Endothelial cell of umbilical vein (primary cell): ENCODE measurements at regions of chr17 and their contacts with region 1.

Region 1: DNA sequence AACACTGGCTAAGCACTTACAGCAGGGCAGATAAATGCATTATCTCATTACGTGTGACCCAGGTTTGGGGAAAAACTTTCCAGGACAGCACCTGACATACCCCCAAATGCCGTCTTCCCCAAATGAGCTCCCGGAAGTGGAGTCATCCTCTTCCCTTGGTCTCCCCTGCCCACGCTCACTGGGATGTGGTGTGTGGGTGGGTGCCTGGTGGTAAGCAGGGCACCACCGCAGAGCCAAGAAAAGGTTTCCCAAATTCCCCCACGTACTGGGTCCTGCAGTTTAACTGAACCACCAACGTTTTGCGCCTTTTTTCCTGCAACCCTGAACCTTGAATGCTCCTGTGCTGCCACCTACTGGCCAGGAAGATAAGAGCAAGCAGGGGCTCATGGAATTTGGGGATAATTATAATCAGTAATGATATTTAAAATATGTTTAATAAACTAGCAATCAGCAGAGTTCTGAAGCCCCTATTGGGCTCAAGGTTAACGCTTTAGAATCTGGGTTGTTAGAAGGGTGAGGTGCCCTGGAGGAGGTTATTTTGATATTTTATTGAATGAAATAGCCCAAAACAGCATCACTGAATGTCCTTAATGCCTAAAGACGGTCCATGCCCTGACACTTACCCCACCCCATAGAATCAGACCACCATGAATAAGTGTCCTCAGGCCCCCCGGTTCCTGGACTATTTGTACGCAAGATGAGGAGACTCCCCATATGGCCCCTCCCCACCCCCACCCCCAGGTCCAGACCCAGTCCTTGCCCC is 8.0 kb downstream of the SPPL2C start:
- DNase-seq: peak; percentile 44
- H3K4me3 ChIP-seq: no peak overlapping the region
- H3K27ac ChIP-seq: no peak overlapping the region
- H3K4me1 ChIP-seq: no peaks in the 10 kb centered on the region
- H3K27me3 ChIP-seq: peaks cover 0 to 4% of the 10 kb centered on the region in 2 experiments
- CTCF ChIP-seq: peak; percentile 76 to 91
- POLR2A ChIP-seq: no peak

Region 2: DNA sequence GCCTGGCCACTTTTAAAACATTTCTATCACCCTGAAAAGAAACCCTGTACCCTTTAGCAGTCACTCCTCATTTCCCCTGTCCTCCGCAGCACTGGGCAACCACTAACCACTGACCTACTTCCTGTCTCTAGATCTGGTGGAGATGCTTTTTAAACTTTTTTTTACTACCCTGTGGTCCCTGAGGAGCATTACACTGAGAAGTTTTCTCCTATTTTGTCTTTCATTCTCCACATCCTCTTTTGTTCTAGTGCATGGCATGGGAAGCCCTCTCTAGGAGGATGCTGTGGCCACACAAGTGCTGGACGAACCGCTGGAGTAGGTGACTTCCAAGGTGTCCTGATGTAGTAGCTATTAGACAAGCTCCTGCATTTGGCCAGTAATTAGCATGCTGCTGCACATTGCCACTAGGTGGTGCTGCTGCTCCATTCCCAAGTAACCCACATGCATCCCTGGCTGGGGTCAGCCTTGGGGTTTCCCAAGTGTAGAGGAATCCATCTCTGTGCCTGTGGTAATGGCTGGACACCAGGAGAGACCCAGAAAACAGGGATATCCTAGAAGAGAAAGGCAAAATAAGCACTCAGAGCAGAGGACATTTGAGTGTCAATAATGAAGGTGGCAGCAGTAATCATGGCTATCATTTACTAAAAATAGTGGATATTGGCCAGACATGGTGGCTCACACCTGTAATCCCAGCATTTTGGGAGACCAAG is 212.4 kb before region 1 on chr17:
- CTCF ChIA-PET with region 1: interaction called, 48 read pairs
- POLR2A ChIA-PET with region 1: no interaction called
- dilution Hi-C with region 1: no loop called
- intact Hi-C with region 1: loop called (anchors 1 kb)
- DNase-seq: peak; percentile 75
- H3K4me3 ChIP-seq: no peak overlapping the region
- H3K27ac ChIP-seq: no peak overlapping the region
- H3K4me1 ChIP-seq: no peaks in the 10 kb centered on the region
- H3K27me3 ChIP-seq: peaks cover 0 to 1% of the 10 kb centered on the region in 2 experiments
- CTCF ChIP-seq: peak; percentile 92 to 97
- POLR2A ChIP-seq: no peak

Region 3: DNA sequence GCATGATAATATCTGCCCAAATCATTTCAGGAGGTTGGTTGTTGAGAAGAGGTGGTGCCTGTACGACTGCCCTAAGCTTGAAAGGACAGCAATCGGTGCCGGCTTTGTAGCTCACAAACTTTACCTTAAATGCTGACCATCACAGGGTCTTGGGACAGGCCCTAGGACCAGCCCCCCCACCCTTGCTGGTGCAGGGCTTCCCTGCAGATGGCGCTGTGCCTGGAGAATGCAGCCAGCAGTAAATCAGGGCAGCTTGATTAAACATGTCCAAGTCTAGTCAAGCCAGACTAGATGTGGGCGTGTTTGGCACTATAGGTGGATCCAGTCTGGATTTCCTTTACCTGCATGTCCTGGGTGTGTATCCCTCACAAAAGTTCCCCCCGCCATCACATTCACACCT is 204.1 kb before region 1 on chr17:
- CTCF ChIA-PET with region 1: interaction called, 11 read pairs
- POLR2A ChIA-PET with region 1: no interaction called
- dilution Hi-C with region 1: no loop called
- intact Hi-C with region 1: no loop called
- DNase-seq: no peak
- H3K4me3 ChIP-seq: no peak overlapping the region
- H3K27ac ChIP-seq: no peak overlapping the region
- H3K4me1 ChIP-seq: no peaks in the 10 kb centered on the region
- H3K27me3 ChIP-seq: peaks cover 1 to 14% of the 10 kb centered on the region in 2 experiments
- CTCF ChIP-seq: peak in 1 of 2 donors; percentile 20
- POLR2A ChIP-seq: no peak

Region 4: DNA sequence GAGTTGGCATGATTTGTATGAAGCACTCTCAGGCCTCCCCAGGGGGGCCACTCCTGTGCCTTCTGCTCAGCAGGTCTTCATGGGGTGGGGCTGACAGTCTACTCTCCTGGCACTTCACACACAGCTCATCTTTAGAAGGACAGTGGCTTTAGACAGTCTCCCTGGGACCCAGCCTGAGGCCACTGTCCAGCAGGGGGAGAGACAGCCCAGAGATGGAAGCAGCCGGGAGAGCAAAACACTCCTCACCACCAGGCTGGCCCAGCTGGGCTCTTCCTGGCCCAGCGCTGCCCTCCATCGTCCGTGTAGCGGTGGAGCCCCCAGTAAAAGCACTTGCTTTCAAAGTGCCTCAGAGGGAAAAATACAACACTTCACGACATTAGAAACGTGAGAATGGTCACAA is 130.6 kb before region 1 on chr17:
- CTCF ChIA-PET with region 1: interaction called, 10 read pairs
- POLR2A ChIA-PET with region 1: no interaction called
- dilution Hi-C with region 1: no loop called
- intact Hi-C with region 1: no loop called
- DNase-seq: no peak
- H3K4me3 ChIP-seq: no peak overlapping the region
- H3K27ac ChIP-seq: no peak overlapping the region
- H3K4me1 ChIP-seq: no peaks in the 10 kb centered on the region
- H3K27me3 ChIP-seq: peaks cover 2 to 18% of the 10 kb centered on the region in 2 experiments
- CTCF ChIP-seq: peak; percentile 8 to 28
- POLR2A ChIP-seq: no peak